ENCODE measurements at regions of chr1 and their contacts with region 1.

Region 1: GRCh38 chr1:40849801-40850592 is 12.2 kb downstream of the CITED4 start:
- DNase-seq: peak; percentile 83
- CTCF ChIP-seq: peak; percentile 88

Region 2: DNA sequence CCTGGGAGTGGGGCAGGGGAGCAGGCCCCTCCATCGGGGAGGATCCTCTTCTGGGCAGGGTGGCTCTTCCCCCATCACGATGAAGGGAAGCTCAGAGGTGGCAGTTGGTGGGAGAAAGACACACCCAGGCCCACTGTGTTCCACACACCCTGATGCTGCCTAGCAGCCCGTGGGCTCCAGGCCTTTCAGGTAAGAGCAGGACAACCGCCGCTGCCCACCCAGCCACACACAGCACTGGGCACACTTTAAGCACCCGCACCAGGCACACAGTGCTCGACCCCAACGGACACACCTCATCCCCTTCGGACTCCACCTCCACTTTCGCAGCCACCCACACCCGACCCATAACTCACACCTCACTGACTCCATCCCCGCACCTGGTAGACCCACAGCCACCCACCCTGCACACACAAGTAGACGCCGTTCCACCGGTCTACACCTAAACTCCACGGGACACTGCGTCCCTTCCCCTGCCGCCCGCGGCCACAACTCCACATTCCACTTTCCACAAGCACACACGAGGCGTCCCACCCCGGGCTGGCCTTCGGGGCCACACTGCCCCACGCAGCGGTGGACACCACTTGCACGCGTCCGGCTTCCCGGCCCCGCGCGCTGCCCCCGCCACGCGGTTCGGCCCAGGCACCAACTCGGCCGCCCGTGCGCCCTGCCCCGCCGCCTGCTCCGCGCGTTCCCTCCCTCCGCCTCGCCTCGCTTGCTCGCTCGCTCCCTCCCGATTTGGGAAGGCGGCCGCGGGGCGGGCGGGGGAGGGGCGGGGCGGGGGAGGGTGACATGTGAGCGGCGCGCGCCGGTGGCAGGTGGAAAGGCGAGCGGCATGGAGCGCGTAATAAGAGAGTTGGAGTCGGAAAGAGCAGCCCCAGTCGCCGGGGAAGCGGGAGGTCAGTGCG is 66.7 kb before region 1 on chr1 and contains the start of gene KCNQ4:
- in situ Hi-C with region 1: loop called (anchors 10 kb)
- DNase-seq: peak; percentile 63
- CTCF ChIP-seq: no peak

Region 3: GRCh38 chr1:40951943-40952743 is 102.1 kb after region 1 on chr1:
- in situ Hi-C with region 1: loop called (anchors 10 kb)
- DNase-seq: peak; percentile 77
- CTCF ChIP-seq: peak; percentile 94